SK-N-SH (cell line): ENCODE measurements at regions of chr14 and their contacts with region 1.

Region 1: DNA sequence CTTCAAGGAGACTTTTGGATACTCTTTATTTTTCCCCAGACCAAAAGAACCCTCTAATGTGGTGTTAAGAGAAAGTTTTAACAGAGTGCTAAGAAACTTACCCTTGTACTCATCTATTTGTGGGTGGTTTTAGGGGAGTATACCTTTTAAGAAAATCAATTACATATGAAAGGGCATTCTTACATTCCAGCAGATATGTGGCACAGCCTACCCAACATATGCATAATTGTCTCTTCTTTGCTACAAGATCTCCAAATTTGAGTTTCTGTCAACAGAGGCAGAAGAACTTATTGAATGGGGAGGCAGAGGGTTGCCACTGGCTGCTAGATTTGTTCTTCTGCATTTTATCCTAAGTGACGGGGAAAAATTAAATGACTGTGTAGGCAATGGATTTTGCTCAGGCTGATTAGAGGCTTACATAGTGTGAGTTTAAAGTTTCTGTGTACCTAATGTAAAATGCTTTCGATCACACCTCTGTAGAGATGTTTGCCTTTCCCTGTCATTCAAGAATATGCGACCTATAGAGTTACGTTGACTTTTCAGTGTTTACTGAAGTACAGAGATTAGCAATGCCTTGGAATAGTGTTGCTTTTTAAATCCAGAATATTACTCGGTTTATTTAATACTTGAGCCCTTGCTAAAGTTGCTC is 54.6 kb downstream of the PROX2 start:
- DNase-seq: no peak
- H3K4me3 ChIP-seq: no peak overlapping the region
- H3K27ac ChIP-seq: no peak overlapping the region
- H3K4me1 ChIP-seq: peaks cover 0 to 7% of the 10 kb centered on the region in 2 experiments; a peak in 2 of 4 replicates
- H3K27me3 ChIP-seq: no peaks in the 10 kb centered on the region
- CTCF ChIP-seq: no peak
- EP300 ChIP-seq: no peak
- RAD21 ChIP-seq: no peak

Region 2: GRCh38 chr14:74804219-74804826 is 17.1 kb before region 1 on chr14:
- CTCF ChIA-PET with region 1: interaction called, 11 read pairs
- POLR2A ChIA-PET with region 1: no interaction called
- DNase-seq: peak; percentile 44
- H3K4me3 ChIP-seq: no peak overlapping the region; a peak in 1 of 4 replicates
- H3K27ac ChIP-seq: no peak overlapping the region
- H3K4me1 ChIP-seq: no peaks in the 10 kb centered on the region; a peak in 2 of 4 replicates
- H3K27me3 ChIP-seq: no peaks in the 10 kb centered on the region
- CTCF ChIP-seq: peak; percentile 83
- EP300 ChIP-seq: no peak
- RAD21 ChIP-seq: peak; percentile 76

Region 3: GRCh38 chr14:74841230-74842207 is 20.1 kb after region 1 on chr14:
- CTCF ChIA-PET with region 1: no interaction called
- POLR2A ChIA-PET with region 1: no interaction called
- DNase-seq: no peak
- H3K4me3 ChIP-seq: no peak overlapping the region
- H3K27ac ChIP-seq: peak overlapping the region in 1 of 2 experiments; percentile 34; a peak in 2 of 4 replicates
- H3K4me1 ChIP-seq: peaks cover 14 to 41% of the 10 kb centered on the region in 2 experiments; a peak in 3 of 4 replicates
- H3K27me3 ChIP-seq: no peaks in the 10 kb centered on the region
- CTCF ChIP-seq: no peak
- EP300 ChIP-seq: no peak
- RAD21 ChIP-seq: no peak